ENCODE measurements at regions of chr1 and their contacts with region 1.

Region 1: DNA sequence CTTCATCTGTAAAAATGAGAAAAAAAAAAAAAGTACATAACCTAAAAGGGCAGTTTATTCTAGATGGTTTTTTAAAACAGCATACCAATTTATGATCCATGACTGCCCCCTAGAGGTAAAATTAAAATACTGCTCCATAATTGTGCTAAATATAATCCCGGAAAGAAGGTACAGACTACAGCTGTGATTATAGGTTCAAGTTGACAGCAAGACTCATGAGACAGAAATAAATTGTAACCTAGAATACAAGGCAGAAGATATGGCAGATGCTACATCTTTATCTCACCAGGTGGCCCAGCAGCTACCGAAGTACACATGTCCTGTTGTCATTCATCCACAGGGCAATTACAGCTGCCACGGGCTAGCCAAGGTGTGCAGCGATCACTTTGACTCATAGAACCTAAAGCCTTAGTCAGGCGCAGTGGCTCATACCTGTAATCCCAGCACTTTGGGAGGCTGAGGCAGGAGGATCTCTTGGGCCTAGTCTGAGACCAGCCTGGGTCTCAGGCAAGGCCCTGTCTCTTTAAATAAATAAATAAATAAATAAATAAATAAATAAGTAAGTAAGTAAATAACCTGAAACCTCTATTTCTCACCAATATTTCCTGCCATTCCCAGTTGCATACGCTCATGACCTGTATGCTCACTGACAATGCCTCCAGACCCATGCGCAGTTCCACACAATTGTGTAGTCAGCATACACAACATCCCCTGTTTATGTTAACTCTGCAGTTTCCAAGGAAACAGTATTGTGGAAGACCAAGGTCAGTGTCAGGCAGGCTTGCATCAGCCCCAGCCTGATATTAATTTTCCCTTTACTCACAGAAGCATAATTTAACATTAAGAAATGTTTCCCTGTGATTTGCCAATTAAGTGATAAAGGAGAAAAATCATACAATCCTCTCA is 18.3 kb upstream of the PPIE start:
- DNase-seq: peak in 7 of 9 donors; percentile 49 to 75 (median 70)
- ATAC-seq: peak; percentile 87
- H3K4me3 ChIP-seq: no peak overlapping the region
- H3K4me3 Mint-ChIP-seq: no peak overlapping the region
- H3K27ac ChIP-seq: no peak overlapping the region
- H3K27ac Mint-ChIP-seq: no peak overlapping the region
- H3K4me1 ChIP-seq: no peaks in the 10 kb centered on the region
- H3K4me1 Mint-ChIP-seq: peaks cover 0 to 3% (median 0%) of the 10 kb centered on the region in 7 donors
- H3K27me3 ChIP-seq: no peaks in the 10 kb centered on the region
- H3K27me3 Mint-ChIP-seq: peaks cover 19 to 64% (median 41%) of the 10 kb centered on the region in 5 donors

Region 2: DNA sequence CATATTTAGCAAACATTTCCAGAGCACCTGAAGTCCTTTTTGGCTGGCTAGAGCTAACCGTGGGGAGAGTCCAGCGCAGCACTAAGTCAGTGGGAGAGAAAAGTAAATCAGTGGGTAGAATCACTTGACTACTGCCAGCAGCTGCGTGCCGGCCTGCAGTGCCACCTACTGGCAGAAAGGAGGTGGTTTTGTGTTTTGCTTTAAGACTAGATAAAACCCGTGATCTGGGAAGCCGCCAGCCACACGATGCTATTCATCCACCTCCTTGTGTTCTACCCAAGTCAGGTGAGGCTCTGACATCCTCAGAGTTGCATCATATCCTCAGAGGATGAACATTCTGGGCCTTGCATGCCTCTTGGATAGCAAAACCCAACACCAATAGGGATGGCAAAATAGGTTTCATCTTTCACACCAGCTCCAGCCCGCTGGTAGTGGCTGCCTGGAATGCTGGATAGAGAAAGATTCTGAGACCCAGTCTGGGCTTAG is 66.8 kb before region 1 on chr1:
- CTCF ChIA-PET with region 1: interaction called, 3 read pairs
- POLR2A ChIA-PET with region 1: no interaction called
- intact Hi-C with region 1: loop called (anchors 1 kb)
- DNase-seq: peak; percentile 51 to 74 (median 68)
- ATAC-seq: peak; percentile 89
- H3K4me3 ChIP-seq: no peak overlapping the region
- H3K4me3 Mint-ChIP-seq: no peak overlapping the region
- H3K27ac ChIP-seq: no peak overlapping the region
- H3K27ac Mint-ChIP-seq: no peak overlapping the region
- H3K4me1 ChIP-seq: peaks cover 0 to 3% of the 10 kb centered on the region in 2 donors
- H3K4me1 Mint-ChIP-seq: peaks cover 0 to 17% (median 4%) of the 10 kb centered on the region in 7 donors
- H3K27me3 ChIP-seq: no peaks in the 10 kb centered on the region
- H3K27me3 Mint-ChIP-seq: peaks cover 0 to 13% (median 0%) of the 10 kb centered on the region in 5 donors

Region 3: DNA sequence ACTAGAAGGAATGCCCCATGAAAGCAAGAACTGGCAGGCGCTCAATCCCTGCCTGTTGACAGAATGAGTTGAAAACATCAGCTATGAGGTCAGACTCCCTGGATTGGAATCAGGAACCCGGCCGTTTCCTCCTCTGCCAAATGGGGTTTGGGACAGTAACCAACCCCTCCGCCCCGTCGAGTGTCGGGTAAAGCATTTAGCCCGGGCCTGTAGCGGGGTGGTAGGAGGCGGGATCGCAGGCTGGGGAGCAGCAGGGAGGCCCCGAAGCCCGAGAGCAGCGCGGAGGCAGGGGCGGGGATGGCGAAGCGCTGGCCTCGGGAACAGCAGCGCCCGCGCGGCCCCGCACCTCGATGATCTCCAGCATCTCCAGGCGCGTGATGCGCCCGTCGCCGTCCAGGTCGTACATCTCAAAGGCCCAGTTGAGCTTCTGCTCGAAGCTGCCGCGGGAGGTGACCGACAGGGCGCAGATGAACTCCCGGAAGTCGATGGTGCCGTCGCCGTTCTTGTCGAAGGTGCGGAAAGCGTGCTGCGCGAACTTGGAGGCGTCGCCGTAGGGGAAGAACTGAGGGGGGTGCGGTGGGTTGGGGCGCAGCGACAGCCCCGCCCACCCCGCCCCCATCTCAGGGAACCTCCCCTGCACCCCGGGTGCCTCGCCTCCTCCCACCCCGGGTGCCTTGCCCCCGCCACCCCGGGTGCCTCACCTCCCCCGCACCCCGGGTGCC is 36.6 kb before region 1 on chr1:
- CTCF ChIA-PET with region 1: no interaction called
- POLR2A ChIA-PET with region 1: no interaction called
- intact Hi-C with region 1: loop called in 1 of 2 experiments (anchors 2 kb)
- DNase-seq: peak in 6 of 9 donors; percentile 39 to 73 (median 57)
- ATAC-seq: peak; percentile 75
- H3K4me3 ChIP-seq: peak overlapping the region; percentile 37
- H3K4me3 Mint-ChIP-seq: peak overlapping the region in 8 of 10 donors; percentile 23 to 70 (median 58)
- H3K27ac ChIP-seq: peak overlapping the region; percentile 60
- H3K27ac Mint-ChIP-seq: peak overlapping the region in 6 of 9 donors; percentile 16 to 75 (median 36)
- H3K4me1 ChIP-seq: peaks cover 0 to 36% of the 10 kb centered on the region in 2 donors
- H3K4me1 Mint-ChIP-seq: peaks cover 14 to 55% (median 35%) of the 10 kb centered on the region in 7 donors
- H3K27me3 ChIP-seq: no peaks in the 10 kb centered on the region
- H3K27me3 Mint-ChIP-seq: peaks cover 0 to 46% (median 26%) of the 10 kb centered on the region in 5 donors

Region 4: DNA sequence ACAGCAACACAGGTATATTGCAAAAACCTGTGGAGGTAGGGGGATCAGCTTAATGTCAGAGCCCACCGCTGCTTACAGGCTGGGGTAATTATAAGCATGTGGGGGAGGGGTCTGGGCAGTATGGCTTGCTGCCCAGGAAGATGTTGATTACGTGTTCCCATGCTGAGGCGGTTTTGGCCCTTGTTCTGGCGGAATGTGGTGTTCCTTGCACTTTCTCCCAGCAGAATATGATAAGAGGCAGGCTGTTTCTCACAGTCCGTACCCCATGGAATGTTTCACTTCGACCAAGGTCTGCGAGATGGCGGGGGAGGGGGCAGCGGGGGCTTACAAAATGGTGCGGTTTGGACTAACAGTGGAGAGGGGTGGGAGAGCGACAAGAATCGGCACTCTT is 19.3 kb before region 1 on chr1:
- CTCF ChIA-PET with region 1: interaction called, 3 read pairs
- POLR2A ChIA-PET with region 1: no interaction called
- intact Hi-C with region 1: loop called in 1 of 2 experiments (anchors 2 kb)
- DNase-seq: no peak
- ATAC-seq: no peak
- H3K4me3 ChIP-seq: no peak overlapping the region
- H3K4me3 Mint-ChIP-seq: no peak overlapping the region
- H3K27ac ChIP-seq: no peak overlapping the region
- H3K27ac Mint-ChIP-seq: no peak overlapping the region
- H3K4me1 ChIP-seq: no peaks in the 10 kb centered on the region
- H3K4me1 Mint-ChIP-seq: no peaks in the 10 kb centered on the region
- H3K27me3 ChIP-seq: no peaks in the 10 kb centered on the region
- H3K27me3 Mint-ChIP-seq: peaks cover 0 to 46% (median 14%) of the 10 kb centered on the region in 5 donors

Region 5: DNA sequence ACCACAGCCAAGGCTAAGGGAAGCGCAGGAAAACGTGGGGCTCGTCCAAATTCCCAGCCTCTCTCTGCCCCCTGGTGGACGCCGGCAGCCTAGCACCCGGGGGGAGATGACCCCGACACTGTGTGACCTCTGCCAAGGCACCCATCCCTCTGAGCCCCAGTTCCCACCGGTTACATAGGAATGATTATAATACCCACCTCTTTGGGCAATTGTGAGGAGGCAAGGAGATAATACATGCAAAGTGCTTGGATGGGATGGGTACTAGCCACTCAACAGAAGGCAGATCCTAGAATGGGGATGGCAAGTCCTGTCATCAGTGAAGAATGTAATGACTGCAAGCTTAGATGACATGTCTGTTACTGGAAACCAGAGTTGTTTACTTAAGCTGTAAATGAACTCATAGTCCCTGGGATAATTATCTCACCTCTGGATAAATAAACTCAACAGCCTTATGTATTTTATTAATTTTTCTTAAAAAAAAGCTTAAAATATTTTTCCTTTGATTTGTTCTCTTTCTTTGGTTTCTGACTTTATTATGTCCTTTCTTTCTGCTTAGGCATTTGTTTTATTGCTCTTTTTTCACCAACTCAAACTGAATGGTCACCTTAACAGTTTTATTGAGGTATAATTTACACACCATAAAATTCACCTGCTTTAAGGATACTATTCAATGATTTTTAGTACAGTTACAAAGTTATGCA is 79.6 kb after region 1 on chr1:
- CTCF ChIA-PET with region 1: no interaction called
- POLR2A ChIA-PET with region 1: no interaction called
- intact Hi-C with region 1: loop called in 1 of 2 experiments (anchors 1 kb)
- DNase-seq: peak; percentile 23 to 76 (median 44)
- ATAC-seq: peak; percentile 79
- H3K4me3 ChIP-seq: peak overlapping the region; percentile 48
- H3K4me3 Mint-ChIP-seq: peak overlapping the region; percentile 42 to 76 (median 73)
- H3K27ac ChIP-seq: peak overlapping the region; percentile 22
- H3K27ac Mint-ChIP-seq: peak overlapping the region in 6 of 9 donors; percentile 38 to 94 (median 82)
- H3K4me1 ChIP-seq: peaks cover 4 to 7% of the 10 kb centered on the region in 2 donors
- H3K4me1 Mint-ChIP-seq: peaks cover 0 to 17% (median 11%) of the 10 kb centered on the region in 7 donors
- H3K27me3 ChIP-seq: no peaks in the 10 kb centered on the region
- H3K27me3 Mint-ChIP-seq: peaks cover 0 to 2% (median 0%) of the 10 kb centered on the region in 5 donors

Measured in naive thymus-derived CD4-positive, alpha-beta T cell (primary cell).